ENCODE measurements at regions of chr11 and their contacts with region 1.

Region 1: GRCh38 chr11:22244986-22245592 is 52.2 kb downstream of the ANO5 start:
- DNase-seq: peak; percentile 26
- ATAC-seq: peak; percentile 41 to 80

Region 2: GRCh38 chr11:22169833-22170232 is 75.3 kb before region 1 on chr11:
- intact Hi-C with region 1: loop called in 1 of 2 experiments (anchors 5 kb)
- DNase-seq: no peak
- ATAC-seq: no peak